Endothelial cell of umbilical vein (primary cell): ENCODE measurements at regions of chr16 and their contacts with region 1.

Region 1: GRCh38 chr16:19067349-19068236 is at the start of gene COQ7:
- DNase-seq: peak; percentile 99
- H3K4me3 ChIP-seq: peak within 1 kb of the TSS; percentile 46 to 85 (median 57)
- H3K27ac ChIP-seq: peak within 1 kb of the TSS; percentile 93
- H3K4me1 ChIP-seq: peaks cover 14% of the 10 kb centered on the region
- H3K27me3 ChIP-seq: no peaks in the 10 kb centered on the region
- CTCF ChIP-seq: no peak
- POLR2A ChIP-seq: no peak
- total RNA-seq, gene COQ7: 22.1 and 24.2 TPM in 2 replicates

Region 2: GRCh38 chr16:18932243-18932981 is 135.2 kb before region 1 on chr16:
- CTCF ChIA-PET with region 1: no interaction called
- POLR2A ChIA-PET with region 1: no interaction called
- dilution Hi-C with region 1: no loop called
- intact Hi-C with region 1: loop called (anchors 5 kb)
- DNase-seq: no peak
- H3K4me3 ChIP-seq: no peak overlapping the region
- H3K27ac ChIP-seq: no peak overlapping the region
- H3K4me1 ChIP-seq: no peaks in the 10 kb centered on the region
- H3K27me3 ChIP-seq: peaks cover 0 to 2% of the 10 kb centered on the region in 2 experiments
- CTCF ChIP-seq: no peak
- POLR2A ChIP-seq: no peak

Region 3: GRCh38 chr16:19029980-19030379 is 37.6 kb before region 1 on chr16:
- CTCF ChIA-PET with region 1: no interaction called
- POLR2A ChIA-PET with region 1: no interaction called
- dilution Hi-C with region 1: no loop called
- intact Hi-C with region 1: loop called (anchors 2 kb)
- DNase-seq: peak; percentile 40
- H3K4me3 ChIP-seq: no peak overlapping the region
- H3K27ac ChIP-seq: no peak overlapping the region
- H3K4me1 ChIP-seq: peaks cover 3% of the 10 kb centered on the region
- H3K27me3 ChIP-seq: no peaks in the 10 kb centered on the region
- CTCF ChIP-seq: no peak
- POLR2A ChIP-seq: no peak

Region 4: GRCh38 chr16:19105891-19106624 is 38.5 kb after region 1 on chr16:
- CTCF ChIA-PET with region 1: no interaction called
- POLR2A ChIA-PET with region 1: no interaction called
- dilution Hi-C with region 1: no loop called
- intact Hi-C with region 1: loop called (anchors 1 kb)
- DNase-seq: no peak
- H3K4me3 ChIP-seq: no peak overlapping the region
- H3K27ac ChIP-seq: no peak overlapping the region
- H3K4me1 ChIP-seq: peaks cover 15% of the 10 kb centered on the region
- H3K27me3 ChIP-seq: no peaks in the 10 kb centered on the region
- CTCF ChIP-seq: no peak
- POLR2A ChIP-seq: no peak

Region 5: DNA sequence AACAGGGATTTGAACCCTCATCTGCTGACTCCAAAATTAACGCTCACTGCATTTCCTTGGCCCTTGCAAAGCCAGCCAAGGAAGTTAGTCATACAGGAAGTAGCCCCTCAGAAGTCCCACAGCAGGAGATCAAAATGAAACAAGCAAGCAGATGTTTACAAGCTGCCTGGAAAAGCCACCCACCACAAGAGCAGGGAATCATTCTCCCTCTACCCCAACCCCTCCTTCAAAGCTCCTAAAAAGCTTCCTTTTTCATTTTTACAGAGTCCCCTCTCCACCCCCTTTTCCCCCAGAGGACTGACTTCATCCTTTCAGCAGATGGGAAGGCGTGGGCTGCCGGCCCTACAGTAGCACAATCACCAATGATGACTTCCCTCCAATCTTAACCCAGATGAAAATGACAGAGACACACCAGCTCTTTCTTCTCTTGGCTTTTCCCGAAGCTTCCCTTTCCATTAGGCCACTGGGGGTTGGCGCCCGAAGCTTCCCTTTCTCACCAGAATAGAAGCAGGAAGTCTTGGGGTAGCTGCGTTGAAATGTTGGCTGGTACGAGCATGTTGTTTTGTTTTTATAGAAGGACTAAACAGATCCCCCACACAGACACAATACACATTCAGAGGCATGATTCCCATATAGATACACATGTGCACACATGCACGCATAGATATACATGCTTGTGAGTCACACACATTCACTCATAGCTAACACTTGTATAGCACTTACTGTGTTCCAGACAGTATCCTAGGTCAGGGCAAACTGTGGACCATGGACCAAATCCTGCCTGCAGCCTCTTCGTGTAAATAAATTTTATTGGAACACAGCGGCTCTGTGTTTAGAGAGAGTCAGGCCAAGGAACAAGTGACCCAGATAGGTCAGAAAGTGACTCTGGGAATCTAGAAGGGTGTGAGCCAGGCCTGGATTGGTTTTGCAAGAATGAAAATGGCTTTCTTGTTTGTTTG is 63.5 kb after region 1 on chr16:
- CTCF ChIA-PET with region 1: no interaction called
- POLR2A ChIA-PET with region 1: no interaction called
- dilution Hi-C with region 1: no loop called
- intact Hi-C with region 1: loop called (anchors 1 kb)
- DNase-seq: peak; percentile 61
- H3K4me3 ChIP-seq: peak overlapping the region in 2 of 3 experiments; percentile 10 to 43
- H3K27ac ChIP-seq: peak overlapping the region; percentile 99
- H3K4me1 ChIP-seq: peaks cover 22% of the 10 kb centered on the region
- H3K27me3 ChIP-seq: no peaks in the 10 kb centered on the region
- CTCF ChIP-seq: no peak
- POLR2A ChIP-seq: no peak

Region 6: GRCh38 chr16:19521471-19522396 is 454.1 kb after region 1 on chr16 and contains the start of gene GDE1:
- CTCF ChIA-PET with region 1: no interaction called
- POLR2A ChIA-PET with region 1: no interaction called
- dilution Hi-C with region 1: no loop called
- intact Hi-C with region 1: loop called (anchors 5 kb)
- DNase-seq: peak; percentile 92
- H3K4me3 ChIP-seq: peak within 1 kb of the TSS; percentile 88 to 93 (median 89)
- H3K27ac ChIP-seq: peak within 1 kb of the TSS; percentile 50
- H3K4me1 ChIP-seq: peaks cover 21% of the 10 kb centered on the region
- H3K27me3 ChIP-seq: no peaks in the 10 kb centered on the region
- CTCF ChIP-seq: peak in 1 of 2 donors; percentile 64
- POLR2A ChIP-seq: peak; percentile 80
- total RNA-seq, gene GDE1: 50.5 and 51.5 TPM in 2 replicates